ENCODE measurements at regions of chrX and their contacts with region 1.

Region 1: DNA sequence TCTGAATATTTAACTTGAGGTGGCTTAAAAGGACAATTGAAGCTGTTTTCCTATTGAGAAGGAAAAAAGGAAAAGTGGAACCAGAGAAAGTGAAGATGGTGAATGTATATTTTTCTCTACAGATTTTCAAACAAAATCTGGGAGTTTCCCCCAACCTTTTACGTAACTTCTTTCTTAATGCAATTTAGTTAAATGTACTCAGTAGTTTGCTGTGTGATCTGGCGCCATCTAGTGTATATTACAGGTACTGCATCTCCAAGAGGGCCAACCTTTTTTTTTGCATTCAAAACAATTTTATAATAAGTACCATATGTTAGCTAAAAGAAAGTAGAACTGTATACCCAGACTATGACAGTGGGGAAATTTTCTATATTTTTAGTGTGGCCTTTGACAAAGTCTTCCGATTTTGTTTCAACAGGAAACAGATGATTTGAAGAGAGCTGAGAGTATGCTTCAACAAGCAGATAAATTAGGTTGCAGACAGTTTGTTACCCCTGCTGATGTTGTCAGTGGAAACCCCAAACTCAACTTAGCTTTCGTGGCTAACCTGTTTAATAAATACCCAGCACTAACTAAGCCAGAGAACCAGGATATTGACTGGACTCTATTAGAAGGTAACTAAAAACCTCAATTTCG is 82.0 kb downstream of the PLS3 start:
- DNase-seq: peak; percentile 9 to 65
- ATAC-seq: peak in 1 of 2 experiments; percentile 33; a peak in 1 of 6 replicates
- H3K4me3 ChIP-seq: no peak overlapping the region
- H3K27ac ChIP-seq: 0 out of 6 replicates have a peak overlapping the region, but pooled peaks of 1 of the 2 experiments have one; percentile 24
- H3K4me1 ChIP-seq: peaks cover 5% of the 10 kb centered on the region; the same call in 2 of the 3 replicates
- CTCF ChIP-seq: peak; percentile 76
- EP300 ChIP-seq: no peak
- POLR2A ChIP-seq: no peak
- RAD21 ChIP-seq: peak; percentile 79 to 81

Region 2: GRCh38 chrX:115625572-115626301 is 17.3 kb before region 1 on chrX:
- CTCF ChIA-PET with region 1: interaction called, 23 read pairs
- POLR2A ChIA-PET with region 1: no interaction called
- DNase-seq: no peak
- ATAC-seq: no peak
- H3K4me3 ChIP-seq: no peak overlapping the region
- H3K27ac ChIP-seq: no peak overlapping the region
- H3K4me1 ChIP-seq: peaks cover 11% of the 10 kb centered on the region
- CTCF ChIP-seq: no peak
- EP300 ChIP-seq: no peak
- POLR2A ChIP-seq: no peak
- RAD21 ChIP-seq: no peak

Region 3: GRCh38 chrX:115632455-115632854 is 10.6 kb before region 1 on chrX:
- CTCF ChIA-PET with region 1: interaction called, 23 read pairs
- POLR2A ChIA-PET with region 1: no interaction called
- DNase-seq: no peak
- ATAC-seq: no peak
- H3K4me3 ChIP-seq: no peak overlapping the region
- H3K27ac ChIP-seq: no peak overlapping the region
- H3K4me1 ChIP-seq: no peaks in the 10 kb centered on the region
- CTCF ChIP-seq: no peak
- EP300 ChIP-seq: no peak
- POLR2A ChIP-seq: no peak
- RAD21 ChIP-seq: no peak

Region 4: GRCh38 chrX:115665122-115665521 is 22.1 kb after region 1 on chrX:
- CTCF ChIA-PET with region 1: interaction called, 12 read pairs
- POLR2A ChIA-PET with region 1: no interaction called
- DNase-seq: no peak
- ATAC-seq: no peak; a peak in 1 of 6 replicates
- H3K4me3 ChIP-seq: no peak overlapping the region
- H3K27ac ChIP-seq: no peak overlapping the region
- H3K4me1 ChIP-seq: no peaks in the 10 kb centered on the region
- CTCF ChIP-seq: no peak
- EP300 ChIP-seq: no peak
- POLR2A ChIP-seq: no peak
- RAD21 ChIP-seq: no peak